Activated CD8-positive, alpha-beta T cell treated with anti-CD3 and anti-CD28 coated beads, Interleukin-2, amount 10 ng/mL, durations not matched to agents 7 days and 5 days (primary cell): ENCODE measurements at regions of chr12 and their contacts with region 1.

Region 1: DNA sequence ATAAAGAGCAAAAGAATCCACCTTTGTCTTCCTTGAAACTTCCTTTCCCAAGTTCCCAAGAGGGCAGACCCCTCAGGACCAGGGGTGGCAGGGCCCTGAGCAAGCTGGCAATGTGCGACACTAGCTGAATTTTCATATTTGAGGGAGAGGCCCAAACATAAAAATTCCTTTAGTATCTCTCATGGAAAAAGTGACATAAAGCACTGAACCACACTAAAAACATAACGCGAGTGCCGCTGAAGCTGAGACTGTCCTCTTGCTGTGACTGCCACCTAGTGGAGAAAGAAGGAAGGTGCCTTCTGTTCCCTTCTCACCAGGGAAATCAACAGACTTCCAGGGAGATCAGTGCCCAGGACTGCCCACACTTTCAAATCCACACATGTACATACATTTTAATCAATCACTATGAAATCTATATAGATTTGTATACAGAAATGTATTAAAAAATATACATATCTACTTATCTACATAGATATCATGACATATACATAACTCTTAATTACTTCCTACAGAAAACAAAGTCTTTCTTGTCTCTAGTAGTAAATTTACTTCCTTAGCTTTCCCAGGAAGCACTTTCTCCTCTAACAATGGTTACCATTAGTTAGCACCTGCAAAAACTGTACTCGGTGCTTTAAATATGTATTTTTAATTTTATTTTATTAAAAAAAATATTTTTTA is 53.8 kb downstream of the SSH1 start:
- DNase-seq: peak; percentile 81
- ATAC-seq: peak; percentile 90
- H3K4me3 Mint-ChIP-seq: no peak overlapping the region
- H3K27ac Mint-ChIP-seq: no peak overlapping the region
- H3K4me1 Mint-ChIP-seq: peaks cover 13% of the 10 kb centered on the region
- H3K27me3 Mint-ChIP-seq: no peaks in the 10 kb centered on the region

Region 2: DNA sequence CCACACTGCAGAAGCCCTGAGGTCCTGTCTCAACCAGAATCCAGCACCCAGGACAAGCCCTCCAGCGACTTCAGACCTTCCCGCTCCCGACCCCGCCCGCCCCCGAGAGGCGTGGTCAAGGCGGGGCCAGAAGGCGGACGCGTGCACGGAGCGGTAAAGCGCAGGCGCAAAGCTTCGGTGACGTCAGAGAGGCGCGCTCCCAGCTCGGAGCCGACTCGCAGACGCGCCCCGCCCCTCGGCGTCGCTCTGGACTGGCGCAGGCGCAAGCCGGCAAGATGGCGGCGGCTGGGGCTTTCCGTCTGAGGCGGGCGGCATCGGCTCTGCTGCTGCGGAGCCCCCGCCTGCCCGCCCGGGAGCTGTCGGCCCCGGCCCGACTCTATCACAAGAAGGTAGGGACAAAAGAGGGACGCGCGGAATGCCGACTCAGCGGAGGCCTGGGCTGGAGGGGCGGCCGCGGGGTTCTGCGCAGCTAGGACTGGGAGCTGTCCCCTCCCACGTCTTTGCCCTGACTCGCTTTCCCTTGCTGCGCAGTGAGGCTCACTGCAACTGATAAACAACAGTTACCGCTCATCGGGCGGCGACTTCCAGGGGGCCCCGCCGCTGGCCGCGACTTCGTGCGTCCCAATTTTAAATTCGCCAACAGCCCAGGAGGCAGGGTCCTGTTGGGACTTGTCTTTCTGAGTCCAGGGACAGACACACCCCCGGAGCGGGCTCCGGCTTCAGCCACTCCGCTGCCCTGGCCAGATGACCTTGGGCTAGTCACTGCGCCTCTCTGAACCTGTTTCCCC is 241.0 kb before region 1 on chr12 and contains the start of gene ISCU:
- CTCF ChIA-PET with region 1: interaction called, 30 read pairs
- POLR2A ChIA-PET with region 1: no interaction called
- DNase-seq: peak; percentile 98
- ATAC-seq: peak; percentile 78
- H3K4me3 Mint-ChIP-seq: peak within 1 kb of the TSS; percentile 100
- H3K27ac Mint-ChIP-seq: peak within 1 kb of the TSS; percentile 100
- H3K4me1 Mint-ChIP-seq: peaks cover 67% of the 10 kb centered on the region
- H3K27me3 Mint-ChIP-seq: no peaks in the 10 kb centered on the region
- total RNA-seq, gene ISCU: 58.5 to 59.5 TPM

Region 3: GRCh38 chr12:108618079-108618952 is 185.3 kb before region 1 on chr12:
- CTCF ChIA-PET with region 1: interaction called, 35 read pairs
- POLR2A ChIA-PET with region 1: no interaction called
- DNase-seq: peak; percentile 82
- ATAC-seq: peak; percentile 69
- H3K4me3 Mint-ChIP-seq: no peak overlapping the region
- H3K27ac Mint-ChIP-seq: peak overlapping the region; percentile 71
- H3K4me1 Mint-ChIP-seq: peaks cover 52% of the 10 kb centered on the region
- H3K27me3 Mint-ChIP-seq: no peaks in the 10 kb centered on the region

Region 4: GRCh38 chr12:108685469-108686260 is 117.9 kb before region 1 on chr12:
- CTCF ChIA-PET with region 1: interaction called, 27 read pairs
- POLR2A ChIA-PET with region 1: no interaction called
- DNase-seq: no peak
- ATAC-seq: no peak
- H3K4me3 Mint-ChIP-seq: no peak overlapping the region
- H3K27ac Mint-ChIP-seq: no peak overlapping the region
- H3K4me1 Mint-ChIP-seq: peaks cover 33% of the 10 kb centered on the region
- H3K27me3 Mint-ChIP-seq: no peaks in the 10 kb centered on the region

Region 5: DNA sequence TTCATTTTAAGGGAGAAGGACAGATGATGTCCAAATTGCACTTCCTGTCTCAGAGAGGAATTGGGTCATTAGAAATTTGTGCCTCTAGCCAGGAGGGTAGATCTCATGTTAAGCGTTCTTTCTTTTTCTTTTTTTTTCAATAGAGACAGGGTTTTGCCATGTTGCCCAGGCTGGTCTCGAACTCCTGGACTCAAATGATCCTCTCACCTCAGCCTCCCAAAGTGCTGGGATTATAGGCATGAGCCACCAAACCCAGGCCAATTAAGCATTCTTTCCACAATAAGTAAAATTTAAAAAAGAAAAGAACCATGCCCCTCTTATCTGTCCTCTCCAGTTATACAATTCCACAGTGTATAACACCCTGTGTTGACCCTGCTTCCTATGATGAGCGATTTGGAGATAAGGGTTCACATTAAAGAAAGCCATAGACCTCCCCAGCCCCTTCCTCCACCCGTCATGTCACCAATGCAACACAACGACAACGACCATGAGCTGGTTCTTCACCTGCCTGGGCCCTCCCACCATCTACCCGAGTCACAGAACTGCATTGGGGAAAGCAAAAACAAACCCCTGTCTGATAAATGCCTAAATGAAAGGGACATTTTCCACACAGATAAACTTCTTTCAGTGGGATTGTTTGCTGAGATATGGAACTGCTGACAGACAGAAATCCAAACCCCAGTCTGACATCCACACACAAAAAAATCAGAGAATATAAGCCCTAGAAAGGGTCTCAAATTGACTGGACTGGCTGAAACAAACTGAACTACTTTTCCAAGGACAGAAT is 16.5 kb after region 1 on chr12:
- CTCF ChIA-PET with region 1: interaction called, 12 read pairs
- POLR2A ChIA-PET with region 1: no interaction called
- DNase-seq: no peak
- ATAC-seq: no peak
- H3K4me3 Mint-ChIP-seq: no peak overlapping the region
- H3K27ac Mint-ChIP-seq: peak overlapping the region; percentile 39
- H3K4me1 Mint-ChIP-seq: peaks cover 28% of the 10 kb centered on the region
- H3K27me3 Mint-ChIP-seq: no peaks in the 10 kb centered on the region

Region 6: GRCh38 chr12:108846290-108846701 is 42.7 kb after region 1 on chr12:
- CTCF ChIA-PET with region 1: no interaction called
- POLR2A ChIA-PET with region 1: no interaction called
- DNase-seq: no peak
- ATAC-seq: no peak
- H3K4me3 Mint-ChIP-seq: no peak overlapping the region
- H3K27ac Mint-ChIP-seq: no peak overlapping the region
- H3K4me1 Mint-ChIP-seq: peaks cover 8% of the 10 kb centered on the region
- H3K27me3 Mint-ChIP-seq: no peaks in the 10 kb centered on the region